ENCODE measurements at regions of chr4 and their contacts with region 1.

Region 1: DNA sequence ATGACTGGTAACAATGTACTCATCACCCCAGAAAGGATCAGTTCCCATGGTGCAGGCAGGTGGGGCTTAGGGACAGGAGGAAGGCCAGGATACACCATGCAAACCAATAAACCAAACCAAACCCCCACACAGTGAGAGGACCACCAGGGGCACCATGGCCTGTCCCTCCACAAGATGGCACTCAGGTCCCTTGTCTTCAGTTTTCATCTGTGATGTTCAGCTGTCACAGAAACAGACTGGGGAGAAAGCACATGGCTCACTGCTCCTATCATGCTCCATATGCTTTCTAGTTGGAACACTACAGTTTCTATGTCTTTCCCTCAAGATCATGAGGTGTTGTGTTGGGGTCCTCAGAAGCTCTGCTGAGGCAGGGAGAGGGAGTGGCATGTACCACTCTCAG is 10.1 kb downstream of the HS3ST1 start:
- DNase-seq: peak; percentile 31
- ATAC-seq: no peak
- H3K4me3 Mint-ChIP-seq: no peak overlapping the region
- H3K27ac Mint-ChIP-seq: no peak overlapping the region
- H3K4me1 Mint-ChIP-seq: no peaks in the 10 kb centered on the region
- H3K27me3 Mint-ChIP-seq: no peaks in the 10 kb centered on the region

Region 2: DNA sequence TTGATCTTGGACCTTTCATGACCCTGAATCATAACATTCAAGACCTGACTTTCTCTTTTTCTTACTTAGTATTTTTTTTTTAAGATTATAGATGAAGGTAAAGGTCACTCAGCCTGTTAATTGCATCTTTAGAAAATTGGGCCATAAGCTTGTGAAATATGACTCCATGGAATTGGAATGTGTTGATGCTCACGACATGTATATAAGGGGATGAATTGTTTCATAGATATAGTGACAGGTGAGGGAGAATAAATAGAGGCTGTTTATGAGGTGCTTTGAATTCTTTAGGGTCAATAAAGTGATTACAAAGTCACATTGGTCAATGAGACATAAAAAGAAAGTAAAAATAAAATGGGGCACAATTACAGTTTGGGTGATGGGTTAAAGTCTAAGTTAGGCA is 37.8 kb after region 1 on chr4:
- CTCF ChIA-PET with region 1: no interaction called
- POLR2A ChIA-PET with region 1: no interaction called
- intact Hi-C with region 1: no loop called
- DNase-seq: no peak
- ATAC-seq: no peak
- H3K4me3 Mint-ChIP-seq: no peak overlapping the region
- H3K27ac Mint-ChIP-seq: no peak overlapping the region
- H3K4me1 Mint-ChIP-seq: peaks cover 3% of the 10 kb centered on the region
- H3K27me3 Mint-ChIP-seq: no peaks in the 10 kb centered on the region

Region 3: GRCh38 chr4:11720292-11720691 is 301.7 kb after region 1 on chr4:
- CTCF ChIA-PET with region 1: no interaction called
- POLR2A ChIA-PET with region 1: no interaction called
- intact Hi-C with region 1: loop called in 1 of 2 experiments (anchors 2 kb)
- DNase-seq: no peak
- ATAC-seq: no peak
- H3K4me3 Mint-ChIP-seq: no peak overlapping the region
- H3K27ac Mint-ChIP-seq: no peak overlapping the region
- H3K4me1 Mint-ChIP-seq: no peaks in the 10 kb centered on the region
- H3K27me3 Mint-ChIP-seq: peaks cover 17% of the 10 kb centered on the region